ENCODE measurements at regions of chr6 and their contacts with region 1.

Region 1: DNA sequence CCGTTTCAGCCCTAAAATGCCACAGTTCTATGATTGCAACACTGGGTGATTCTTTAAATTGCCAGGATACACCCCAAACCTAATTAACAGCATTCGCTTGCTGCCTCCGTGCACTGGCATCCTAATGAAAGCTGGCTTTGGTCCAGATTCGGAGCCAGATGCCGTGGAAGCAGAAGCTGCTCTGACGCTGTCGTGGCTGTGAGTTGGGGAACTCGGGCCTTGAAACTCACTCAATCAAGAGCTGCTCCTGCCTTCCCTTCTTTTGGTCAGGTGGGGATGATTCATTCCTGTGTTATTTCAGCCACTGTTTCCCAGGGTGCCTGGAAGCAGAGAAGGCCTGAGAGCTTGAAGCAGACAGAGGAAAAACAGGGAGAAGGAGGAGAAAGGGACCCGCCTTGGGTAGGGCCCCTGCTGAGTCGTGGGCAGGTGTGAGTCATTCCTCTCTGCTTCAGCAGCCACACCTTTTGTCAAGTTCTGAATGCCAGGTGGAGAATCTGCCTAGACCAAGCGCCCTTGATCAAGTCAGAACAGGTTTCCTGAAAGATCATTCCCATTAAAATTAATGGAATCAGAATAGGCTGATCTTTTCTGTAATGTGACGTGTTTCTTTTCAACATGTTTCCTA is 36.2 kb upstream of the DSP start:
- DNase-seq: peak; percentile 100
- H3K4me3 ChIP-seq: peak overlapping the region in 2 of 3 experiments; percentile 14 to 24
- H3K27ac ChIP-seq: peak overlapping the region; percentile 100
- H3K4me1 ChIP-seq: peaks cover 23% of the 10 kb centered on the region
- H3K27me3 ChIP-seq: no peaks in the 10 kb centered on the region
- CTCF ChIP-seq: no peak

Region 2: DNA sequence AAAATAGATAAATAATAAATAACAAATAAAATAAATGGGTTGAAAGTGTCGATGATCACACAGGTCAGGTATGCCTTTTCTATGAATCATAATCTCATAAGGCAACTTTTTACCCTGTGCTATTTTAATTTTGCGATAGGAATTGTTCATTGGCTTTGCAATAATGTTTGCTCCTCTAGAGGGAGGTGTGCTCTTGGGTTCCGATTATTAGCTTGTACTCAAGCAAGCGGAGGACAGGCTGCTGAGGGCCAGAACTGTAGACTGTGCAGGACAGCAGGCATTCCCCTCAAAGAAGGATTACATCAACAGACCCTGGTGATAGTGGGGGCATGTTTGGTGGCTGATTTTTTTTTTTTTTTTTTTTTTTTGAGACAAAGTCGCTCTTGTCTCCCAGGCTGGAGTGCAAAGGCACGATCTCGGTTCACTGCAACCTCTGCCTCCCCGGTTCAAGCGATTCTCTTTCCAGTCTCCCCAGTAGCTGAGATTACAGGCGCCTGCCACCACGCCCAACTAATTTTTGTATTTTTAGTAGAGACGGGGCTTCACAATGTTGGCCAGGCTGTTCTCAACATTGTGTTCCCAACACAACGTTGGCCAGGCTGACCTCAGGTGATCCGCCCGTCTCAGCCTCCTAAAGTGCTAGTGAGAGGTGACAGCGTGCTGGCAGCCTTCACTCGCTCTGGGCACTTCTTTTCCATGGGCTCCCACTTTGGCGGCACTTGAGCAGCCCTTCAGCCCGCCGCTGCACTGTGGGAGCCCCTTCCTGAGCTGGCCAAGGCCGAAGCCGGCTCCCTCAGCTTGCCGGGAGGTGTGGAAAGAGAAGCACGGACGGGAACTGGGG is 80.1 kb before region 1 on chr6:
- CTCF ChIA-PET with region 1: no interaction called
- dilution Hi-C with region 1: no loop called
- in situ Hi-C with region 1: no loop called
- intact Hi-C with region 1: loop called (anchors 2 kb)
- DNase-seq: peak; percentile 86
- H3K4me3 ChIP-seq: no peak overlapping the region
- H3K27ac ChIP-seq: no peak overlapping the region
- H3K4me1 ChIP-seq: no peaks in the 10 kb centered on the region
- H3K27me3 ChIP-seq: no peaks in the 10 kb centered on the region
- CTCF ChIP-seq: peak; percentile 56 to 78

Region 3: GRCh38 chr6:7446619-7447325 is 58.5 kb before region 1 on chr6:
- CTCF ChIA-PET with region 1: no interaction called
- dilution Hi-C with region 1: no loop called
- in situ Hi-C with region 1: no loop called
- intact Hi-C with region 1: loop called (anchors 2 kb)
- DNase-seq: peak; percentile 94
- H3K4me3 ChIP-seq: peak overlapping the region in 2 of 3 experiments; percentile 19 to 27
- H3K27ac ChIP-seq: peak overlapping the region; percentile 87
- H3K4me1 ChIP-seq: peaks cover 18% of the 10 kb centered on the region
- H3K27me3 ChIP-seq: no peaks in the 10 kb centered on the region
- CTCF ChIP-seq: peak in 1 of 2 donors; percentile 22

Region 4: GRCh38 chr6:7468382-7469081 is 36.8 kb before region 1 on chr6:
- CTCF ChIA-PET with region 1: no interaction called
- dilution Hi-C with region 1: no loop called
- in situ Hi-C with region 1: no loop called
- intact Hi-C with region 1: loop called (anchors 5 kb)
- DNase-seq: peak; percentile 54
- H3K4me3 ChIP-seq: no peak overlapping the region
- H3K27ac ChIP-seq: no peak overlapping the region
- H3K4me1 ChIP-seq: peaks cover 17% of the 10 kb centered on the region
- H3K27me3 ChIP-seq: no peaks in the 10 kb centered on the region
- CTCF ChIP-seq: no peak

Region 5: DNA sequence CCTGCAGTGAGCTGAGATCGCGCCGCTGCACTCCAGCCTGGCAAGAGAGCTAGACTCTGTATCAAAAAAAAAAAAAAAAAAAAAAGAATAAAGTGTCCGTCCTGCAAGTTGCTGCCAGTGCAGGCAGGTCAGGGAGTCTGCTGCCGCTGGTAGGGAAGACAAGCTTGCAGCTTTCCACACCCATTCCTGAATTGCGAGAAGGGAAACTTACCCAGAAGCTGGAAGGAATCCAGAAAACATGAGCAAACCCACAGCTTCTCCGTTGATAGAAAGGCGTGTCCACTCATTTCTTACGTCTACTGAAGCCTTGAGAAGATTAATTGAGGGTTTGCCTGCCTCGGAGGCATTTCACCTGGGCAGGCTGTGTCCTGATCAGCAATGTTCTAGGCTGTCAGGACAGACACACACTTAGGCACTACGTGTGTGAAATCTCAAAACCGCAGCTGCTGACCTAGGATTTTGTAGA is 25.5 kb before region 1 on chr6:
- CTCF ChIA-PET with region 1: no interaction called
- dilution Hi-C with region 1: no loop called
- in situ Hi-C with region 1: no loop called
- intact Hi-C with region 1: loop called (anchors 1 kb)
- DNase-seq: peak; percentile 100
- H3K4me3 ChIP-seq: no peak overlapping the region
- H3K27ac ChIP-seq: peak overlapping the region; percentile 94
- H3K4me1 ChIP-seq: peaks cover 7% of the 10 kb centered on the region
- H3K27me3 ChIP-seq: no peaks in the 10 kb centered on the region
- CTCF ChIP-seq: no peak

Region 6: GRCh38 chr6:7528565-7528964 is 23.3 kb after region 1 on chr6:
- CTCF ChIA-PET with region 1: no interaction called
- dilution Hi-C with region 1: no loop called
- in situ Hi-C with region 1: no loop called
- intact Hi-C with region 1: loop called (anchors 2 kb)
- DNase-seq: peak; percentile 97
- H3K4me3 ChIP-seq: no peak overlapping the region
- H3K27ac ChIP-seq: peak overlapping the region; percentile 48
- H3K4me1 ChIP-seq: peaks cover 31% of the 10 kb centered on the region
- H3K27me3 ChIP-seq: no peaks in the 10 kb centered on the region
- CTCF ChIP-seq: no peak

Region 7: DNA sequence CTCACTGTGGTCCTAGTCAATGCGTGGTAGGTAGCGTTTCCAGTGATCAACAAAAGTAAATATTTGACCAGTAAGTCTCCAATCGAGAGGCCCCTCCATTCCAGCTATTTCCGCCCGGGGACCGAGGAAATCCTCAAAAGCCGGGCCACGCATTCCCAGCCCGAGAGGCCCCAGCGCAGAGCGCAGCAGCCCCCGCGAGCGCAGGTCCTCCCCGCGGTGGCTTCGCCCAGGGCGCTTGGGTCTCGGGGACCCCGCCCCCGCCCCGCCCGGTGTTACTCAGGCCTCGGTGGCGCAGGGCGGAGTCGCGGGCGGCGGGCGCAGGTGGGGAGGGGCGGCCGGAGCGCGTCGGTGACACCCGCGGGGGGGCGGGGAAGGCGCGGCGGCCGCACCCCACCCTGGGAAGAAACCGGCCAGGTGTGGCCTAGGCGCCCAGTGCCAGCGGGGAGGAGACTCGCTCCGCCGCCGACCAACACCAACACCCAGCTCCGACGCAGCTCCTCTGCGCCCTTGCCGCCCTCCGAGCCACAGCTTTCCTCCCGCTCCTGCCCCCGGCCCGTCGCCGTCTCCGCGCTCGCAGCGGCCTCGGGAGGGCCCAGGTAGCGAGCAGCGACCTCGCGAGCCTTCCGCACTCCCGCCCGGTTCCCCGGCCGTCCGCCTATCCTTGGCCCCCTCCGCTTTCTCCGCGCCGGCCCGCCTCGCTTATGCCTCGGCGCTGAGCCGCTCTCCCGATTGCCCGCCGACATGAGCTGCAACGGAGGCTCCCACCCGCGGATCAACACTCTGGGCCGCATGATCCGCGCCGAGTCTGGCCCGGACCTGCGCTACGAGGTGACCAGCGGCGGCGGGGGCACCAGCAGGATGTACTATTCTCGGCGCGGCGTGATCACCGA is 36.1 kb after region 1 on chr6 and contains the start of gene DSP:
- CTCF ChIA-PET with region 1: no interaction called
- dilution Hi-C with region 1: no loop called
- in situ Hi-C with region 1: loop called in 1 of 2 experiments (anchors 5 kb)
- intact Hi-C with region 1: loop called (anchors 1 kb)
- DNase-seq: peak; percentile 93
- H3K4me3 ChIP-seq: peak within 1 kb of the TSS; percentile 92 to 99 (median 98)
- H3K27ac ChIP-seq: peak within 1 kb of the TSS; percentile 92
- H3K4me1 ChIP-seq: peaks cover 24% of the 10 kb centered on the region
- H3K27me3 ChIP-seq: no peaks in the 10 kb centered on the region
- CTCF ChIP-seq: no peak
- total RNA-seq, gene DSP: 397 to 468 TPM

Measured in mammary epithelial cell (primary cell).